CD4-positive, alpha-beta memory T cell (primary cell): ENCODE measurements at regions of chr3 and their contacts with region 1.

Region 1: GRCh38 chr3:128123538-128124368 is at the start of gene RUVBL1:
- DNase-seq: peak; percentile 97 to 99 (median 99)
- H3K4me3 ChIP-seq: peak within 1 kb of the TSS; percentile 68 to 96
- H3K4me3 Mint-ChIP-seq: peak within 1 kb of the TSS; percentile 94 to 98 (median 96)
- H3K27ac ChIP-seq: peak within 1 kb of the TSS; percentile 78
- H3K27ac Mint-ChIP-seq: peak within 1 kb of the TSS; percentile 91 to 99 (median 97)
- H3K4me1 ChIP-seq: peaks cover 22% of the 10 kb centered on the region
- H3K4me1 Mint-ChIP-seq: peaks cover 15 to 31% (median 27%) of the 10 kb centered on the region in 4 donors
- H3K27me3 ChIP-seq: no peaks in the 10 kb centered on the region
- H3K27me3 Mint-ChIP-seq: no peaks in the 10 kb centered on the region
- total RNA-seq, gene RUVBL1: 26.6 to 27.0 TPM

Region 2: DNA sequence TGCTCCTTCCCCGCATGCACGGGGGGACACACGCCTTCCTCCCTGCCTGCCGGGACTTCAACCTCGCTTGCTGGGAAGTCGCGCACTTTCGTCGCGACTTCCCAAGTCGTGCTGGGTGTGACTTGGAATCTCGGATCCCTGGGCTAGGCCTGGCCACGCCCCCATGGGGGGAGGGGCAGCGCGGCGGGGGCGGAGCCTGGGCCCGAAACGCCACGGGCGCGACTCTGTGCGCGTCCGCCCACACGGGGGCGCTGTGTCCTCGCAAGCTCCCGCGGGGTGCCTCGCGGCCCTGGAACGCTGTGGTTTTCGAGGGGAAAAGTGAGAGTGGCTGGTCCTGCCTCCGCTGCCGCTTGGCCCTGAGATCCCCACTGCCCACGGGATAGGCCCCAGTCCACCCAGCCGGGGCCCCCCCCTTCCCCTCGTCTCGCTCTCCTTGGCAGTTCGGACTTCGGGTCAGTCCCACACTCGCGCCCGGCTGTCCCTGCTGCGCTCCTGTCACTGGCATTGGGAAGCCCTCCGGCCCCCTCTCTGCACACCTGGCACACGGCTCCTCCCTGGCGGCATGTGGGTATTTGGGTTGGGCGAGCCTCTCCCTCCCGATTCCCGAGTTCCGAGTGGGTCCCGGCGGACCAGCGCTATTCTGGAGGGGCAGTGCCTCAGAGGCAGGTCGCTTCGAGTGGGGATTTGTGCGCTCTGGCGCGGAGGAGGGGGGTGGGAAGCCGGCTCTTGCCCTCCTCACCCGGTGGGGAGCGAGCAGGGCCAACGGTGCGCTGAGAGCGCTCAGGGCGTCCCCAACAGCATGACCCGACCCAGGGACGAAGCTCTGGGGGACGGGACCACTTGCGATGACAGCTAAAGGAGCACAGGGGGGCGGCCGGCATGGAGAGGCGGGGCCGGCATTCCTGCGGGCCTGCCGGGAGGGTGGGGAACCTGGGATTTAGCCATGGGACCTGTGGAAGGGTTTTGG is 48.0 kb before region 1 on chr3:
- CTCF ChIA-PET with region 1: no interaction called
- POLR2A ChIA-PET with region 1: no interaction called
- intact Hi-C with region 1: loop called (anchors 5 kb)
- DNase-seq: peak; percentile 81 to 85 (median 82)
- H3K4me3 ChIP-seq: peak overlapping the region; percentile 29 to 39
- H3K4me3 Mint-ChIP-seq: peak overlapping the region; percentile 65 to 82 (median 75)
- H3K27ac ChIP-seq: peak overlapping the region; percentile 14
- H3K27ac Mint-ChIP-seq: peak overlapping the region in 6 of 7 donors; percentile 37 to 85 (median 64)
- H3K4me1 ChIP-seq: peaks cover 20% of the 10 kb centered on the region
- H3K4me1 Mint-ChIP-seq: peaks cover 2 to 27% (median 6%) of the 10 kb centered on the region in 4 donors
- H3K27me3 ChIP-seq: no peaks in the 10 kb centered on the region
- H3K27me3 Mint-ChIP-seq: no peaks in the 10 kb centered on the region

Region 3: GRCh38 chr3:128112357-128112968 is 11.3 kb before region 1 on chr3:
- CTCF ChIA-PET with region 1: interaction called, 14 read pairs
- POLR2A ChIA-PET with region 1: interaction called, 66 read pairs
- intact Hi-C with region 1: loop called (anchors 1 kb)
- DNase-seq: peak; percentile 63 to 76 (median 69)
- H3K4me3 ChIP-seq: no peak overlapping the region
- H3K4me3 Mint-ChIP-seq: peak overlapping the region in 7 of 8 donors; percentile 32 to 88 (median 72)
- H3K27ac ChIP-seq: peak overlapping the region; percentile 55
- H3K27ac Mint-ChIP-seq: peak overlapping the region; percentile 95 to 99 (median 97)
- H3K4me1 ChIP-seq: peaks cover 40% of the 10 kb centered on the region
- H3K4me1 Mint-ChIP-seq: peaks cover 38 to 51% (median 43%) of the 10 kb centered on the region in 4 donors
- H3K27me3 ChIP-seq: no peaks in the 10 kb centered on the region
- H3K27me3 Mint-ChIP-seq: no peaks in the 10 kb centered on the region

Region 4: DNA sequence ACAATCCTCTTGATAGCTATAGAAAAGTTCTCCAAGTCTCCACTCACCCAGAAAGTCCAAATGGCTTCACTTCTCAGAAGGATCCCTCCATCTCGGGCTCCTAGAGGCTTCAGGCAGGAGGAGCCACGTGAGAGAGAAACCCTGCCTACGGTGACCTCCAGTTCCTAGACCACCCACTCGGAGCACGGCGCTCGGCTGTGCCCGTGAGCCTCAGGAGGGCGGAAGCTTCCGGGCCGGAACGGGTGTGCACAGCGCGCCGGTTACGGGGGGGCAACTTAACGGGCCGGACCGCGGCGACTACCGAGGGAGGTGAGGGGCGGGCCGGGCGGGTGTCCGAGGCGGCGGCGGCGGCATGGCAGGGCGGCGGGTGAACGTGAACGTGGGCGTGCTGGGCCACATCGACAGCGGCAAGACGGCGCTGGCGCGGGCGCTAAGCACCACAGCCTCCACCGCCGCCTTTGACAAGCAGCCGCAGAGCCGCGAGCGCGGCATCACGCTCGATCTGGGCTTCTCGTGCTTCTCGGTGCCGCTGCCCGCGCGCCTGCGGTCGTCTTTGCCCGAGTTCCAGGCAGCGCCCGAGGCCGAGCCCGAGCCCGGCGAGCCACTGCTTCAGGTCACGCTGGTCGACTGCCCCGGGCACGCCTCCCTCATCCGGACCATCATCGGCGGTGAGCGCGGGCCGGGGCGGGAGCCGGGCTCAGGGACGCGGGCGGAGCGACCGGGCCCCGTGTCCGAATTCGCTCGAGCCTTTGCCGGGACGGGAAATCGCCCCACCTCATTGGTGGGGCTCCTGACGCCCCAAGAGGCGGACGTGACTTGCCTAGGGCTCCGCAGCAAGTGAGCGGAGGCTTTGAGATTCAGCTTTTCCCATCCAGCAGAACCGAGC is 29.6 kb after region 1 on chr3 and contains the start of gene EEFSEC:
- CTCF ChIA-PET with region 1: interaction called, 13 read pairs
- POLR2A ChIA-PET with region 1: interaction called, 66 read pairs
- intact Hi-C with region 1: loop called (anchors 1 kb)
- DNase-seq: peak; percentile 81 to 86 (median 83)
- H3K4me3 ChIP-seq: peak within 1 kb of the TSS; percentile 84 to 85
- H3K4me3 Mint-ChIP-seq: peak within 1 kb of the TSS; percentile 83 to 96 (median 90)
- H3K27ac ChIP-seq: peak within 1 kb of the TSS; percentile 65
- H3K27ac Mint-ChIP-seq: peak within 1 kb of the TSS; percentile 85 to 98 (median 94)
- H3K4me1 ChIP-seq: peaks cover 18% of the 10 kb centered on the region
- H3K4me1 Mint-ChIP-seq: peaks cover 15 to 41% (median 28%) of the 10 kb centered on the region in 4 donors
- H3K27me3 ChIP-seq: no peaks in the 10 kb centered on the region
- H3K27me3 Mint-ChIP-seq: peaks cover 0 to 1% of the 10 kb centered on the region in 2 donors
- total RNA-seq, gene EEFSEC: 14.0 to 16.4 TPM